ENCODE measurements at regions of chr1 and their contacts with region 1.

Region 1: DNA sequence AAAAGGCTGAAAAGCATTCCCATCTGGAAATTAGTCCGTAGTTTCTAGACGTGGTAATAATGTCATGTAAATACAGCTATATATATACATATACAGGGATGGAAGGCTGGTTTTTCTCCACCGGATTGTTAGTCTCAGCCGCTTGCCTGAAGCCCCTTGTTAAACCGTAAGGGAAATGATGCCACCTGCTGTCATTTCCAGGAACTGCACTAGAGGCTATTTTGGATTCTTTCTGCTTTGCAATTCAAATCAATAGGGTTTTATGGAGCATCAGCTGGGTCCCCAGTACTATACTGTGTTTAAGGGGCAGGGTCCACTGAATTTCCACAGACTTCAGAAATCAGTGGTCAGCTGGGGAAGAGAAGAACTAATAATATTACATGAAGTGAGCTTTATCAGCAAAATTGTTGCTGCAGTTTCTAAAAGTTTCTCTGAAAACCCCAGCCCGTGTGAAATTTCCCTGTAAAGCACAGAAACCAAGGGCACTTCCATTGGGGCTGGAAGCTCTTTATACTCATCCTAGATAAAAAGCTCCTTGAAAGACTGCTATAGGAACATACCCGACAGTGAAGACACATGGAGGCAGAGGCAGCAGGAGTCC is 33.8 kb upstream of the MPZL1 start:
- DNase-seq: peak; percentile 66
- H3K27ac ChIP-seq: peak overlapping the region; percentile 27; the same call in 1 of the 2 replicates
- CTCF ChIP-seq: peak; percentile 92

Region 2: GRCh38 chr1:167510244-167510643 is 177.8 kb before region 1 on chr1:
- CTCF ChIA-PET with region 1: no interaction called
- POLR2A ChIA-PET with region 1: no interaction called
- DNase-seq: no peak
- H3K27ac ChIP-seq: no peak overlapping the region
- CTCF ChIP-seq: no peak

Region 3: GRCh38 chr1:167555971-167556714 is 131.9 kb before region 1 on chr1:
- CTCF ChIA-PET with region 1: interaction called, 10 read pairs
- POLR2A ChIA-PET with region 1: no interaction called
- DNase-seq: peak; percentile 77
- H3K27ac ChIP-seq: peak overlapping the region; percentile 38
- CTCF ChIP-seq: peak; percentile 86

Region 4: DNA sequence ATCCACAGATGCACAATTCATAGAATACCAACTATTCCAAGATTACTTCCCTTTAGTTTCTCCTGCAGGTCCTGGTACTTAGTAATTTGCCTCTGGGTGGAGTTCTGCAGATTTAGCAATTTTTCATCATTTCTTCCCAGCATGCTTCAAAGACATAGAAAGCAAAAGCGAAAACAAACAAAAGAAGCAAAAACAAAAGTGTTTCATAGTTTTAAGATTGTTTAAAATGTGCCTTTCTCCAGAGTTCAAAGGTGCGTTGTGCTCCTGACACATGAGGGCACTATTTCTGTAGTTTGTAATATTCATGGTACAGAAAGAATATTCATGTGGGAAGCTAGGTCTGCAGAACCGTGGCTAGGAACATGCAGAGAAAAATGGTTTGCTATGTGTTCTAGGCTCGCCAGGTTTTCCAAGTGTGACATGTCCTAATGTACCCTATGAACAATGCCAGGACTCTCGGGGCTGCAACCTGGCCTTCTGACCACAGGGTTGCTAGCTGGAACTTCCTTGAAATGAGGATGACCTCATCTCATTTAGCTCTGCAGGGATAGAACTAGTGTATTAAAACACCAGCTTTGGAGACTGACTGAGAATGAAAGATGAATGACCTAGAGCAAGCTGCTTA is 88.0 kb before region 1 on chr1:
- CTCF ChIA-PET with region 1: interaction called, 27 read pairs
- POLR2A ChIA-PET with region 1: no interaction called
- DNase-seq: peak; percentile 36
- H3K27ac ChIP-seq: no peak overlapping the region
- CTCF ChIP-seq: peak; percentile 69

Region 5: DNA sequence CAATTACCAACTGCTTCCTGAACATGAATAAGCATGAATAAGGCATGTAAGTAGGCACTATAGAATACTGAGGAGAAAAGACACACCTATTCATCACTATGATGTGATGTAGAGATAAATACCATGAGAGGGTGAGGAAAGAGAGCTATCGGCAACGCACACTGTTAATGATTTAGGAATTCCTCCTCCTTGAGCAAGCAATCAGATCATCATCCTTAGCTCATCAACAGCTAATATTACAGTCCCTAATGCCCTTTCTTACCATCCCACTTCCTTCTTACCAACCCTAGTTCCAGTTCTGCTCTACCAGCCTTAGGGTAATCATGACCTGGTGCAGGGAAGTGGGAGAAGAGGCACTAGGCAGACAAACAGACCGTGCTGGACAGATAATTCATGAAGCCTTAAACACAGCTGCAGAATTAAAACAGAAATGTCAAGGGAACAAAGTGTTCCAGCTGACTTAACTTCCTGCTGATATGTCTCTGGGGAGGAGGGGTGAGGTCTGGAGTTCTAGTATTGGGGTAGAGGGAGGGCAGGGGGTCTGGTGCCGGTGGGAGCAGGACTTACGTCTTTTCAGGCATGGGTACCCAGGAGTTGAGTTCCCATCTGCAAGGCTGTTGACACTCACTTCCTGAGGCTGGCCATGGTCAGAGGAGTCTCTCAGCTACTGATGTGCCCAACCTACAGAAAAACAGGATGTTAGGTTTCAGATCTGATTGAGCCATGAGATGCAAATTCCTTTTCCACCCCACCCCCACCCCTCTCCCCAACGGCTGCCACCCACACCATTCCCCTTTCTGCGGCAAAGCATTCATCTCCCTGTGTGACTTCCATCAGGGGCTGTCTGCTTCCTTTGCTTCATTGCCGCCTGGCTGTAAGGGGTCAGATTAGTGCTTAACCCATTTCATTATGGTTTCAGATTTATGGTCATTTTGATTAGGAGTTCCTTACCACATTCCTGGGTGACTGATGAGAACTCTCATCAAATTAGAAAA is 70.6 kb before region 1 on chr1:
- CTCF ChIA-PET with region 1: interaction called, 11 read pairs
- POLR2A ChIA-PET with region 1: no interaction called
- DNase-seq: peak; percentile 57
- H3K27ac ChIP-seq: no peak overlapping the region
- CTCF ChIP-seq: no peak